ENCODE measurements at regions of chr13 and their contacts with region 1.

Region 1: GRCh38 chr13:96958286-96958891 is 35.9 kb downstream of the OXGR1 start:
- DNase-seq: peak; percentile 64
- H3K4me3 Mint-ChIP-seq: no peak overlapping the region
- H3K27ac Mint-ChIP-seq: no peak overlapping the region
- H3K4me1 Mint-ChIP-seq: no peaks in the 10 kb centered on the region
- H3K27me3 Mint-ChIP-seq: no peaks in the 10 kb centered on the region
- CTCF ChIP-seq: peak; percentile 57

Region 2: GRCh38 chr13:96003304-96003703 is 955.1 kb before region 1 on chr13:
- CTCF ChIA-PET with region 1: interaction called, 13 read pairs
- POLR2A ChIA-PET with region 1: no interaction called
- intact Hi-C with region 1: no loop called
- DNase-seq: peak; percentile 27
- H3K4me3 Mint-ChIP-seq: no peak overlapping the region
- H3K27ac Mint-ChIP-seq: no peak overlapping the region
- H3K4me1 Mint-ChIP-seq: no peaks in the 10 kb centered on the region
- H3K27me3 Mint-ChIP-seq: no peaks in the 10 kb centered on the region
- CTCF ChIP-seq: no peak

Region 3: GRCh38 chr13:96450326-96451020 is 507.9 kb before region 1 on chr13:
- CTCF ChIA-PET with region 1: no interaction called
- POLR2A ChIA-PET with region 1: no interaction called
- intact Hi-C with region 1: no loop called
- DNase-seq: no peak
- H3K4me3 Mint-ChIP-seq: no peak overlapping the region
- H3K27ac Mint-ChIP-seq: no peak overlapping the region
- H3K4me1 Mint-ChIP-seq: no peaks in the 10 kb centered on the region
- H3K27me3 Mint-ChIP-seq: no peaks in the 10 kb centered on the region
- CTCF ChIP-seq: no peak

Region 4: DNA sequence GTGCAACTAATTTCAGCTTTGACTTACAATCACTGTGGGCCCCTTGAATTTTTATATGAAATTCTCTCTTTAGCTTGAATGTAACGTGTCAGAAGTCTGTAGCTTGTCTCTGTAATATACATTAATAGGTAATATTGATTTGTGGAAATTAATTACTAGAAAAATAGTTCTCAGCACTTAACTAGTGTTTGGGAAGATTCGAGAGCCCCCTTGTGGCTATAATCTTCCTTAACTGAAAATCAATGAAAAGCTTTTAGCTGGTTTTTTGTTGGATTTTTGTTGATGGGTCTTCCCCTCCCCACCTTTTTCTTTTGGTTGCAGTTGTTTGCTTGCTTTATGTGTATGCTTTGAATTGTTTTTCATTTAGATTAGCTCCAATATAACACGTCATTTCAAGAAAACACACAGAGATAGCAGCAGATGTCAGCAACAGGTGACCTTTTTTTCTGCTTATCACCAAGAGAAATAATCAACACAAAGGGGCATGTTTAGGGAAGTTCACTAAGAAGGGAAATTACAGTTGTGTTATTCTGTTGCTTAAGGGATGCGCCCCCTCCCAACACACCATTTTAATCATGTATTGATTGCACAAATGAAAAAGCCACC is 140.9 kb before region 1 on chr13:
- CTCF ChIA-PET with region 1: interaction called, 9 read pairs
- POLR2A ChIA-PET with region 1: no interaction called
- intact Hi-C with region 1: loop called (anchors 2 kb)
- DNase-seq: peak; percentile 55
- H3K4me3 Mint-ChIP-seq: no peak overlapping the region
- H3K27ac Mint-ChIP-seq: no peak overlapping the region
- H3K4me1 Mint-ChIP-seq: peaks cover 6% of the 10 kb centered on the region
- H3K27me3 Mint-ChIP-seq: no peaks in the 10 kb centered on the region
- CTCF ChIP-seq: peak; percentile 67

Region 5: DNA sequence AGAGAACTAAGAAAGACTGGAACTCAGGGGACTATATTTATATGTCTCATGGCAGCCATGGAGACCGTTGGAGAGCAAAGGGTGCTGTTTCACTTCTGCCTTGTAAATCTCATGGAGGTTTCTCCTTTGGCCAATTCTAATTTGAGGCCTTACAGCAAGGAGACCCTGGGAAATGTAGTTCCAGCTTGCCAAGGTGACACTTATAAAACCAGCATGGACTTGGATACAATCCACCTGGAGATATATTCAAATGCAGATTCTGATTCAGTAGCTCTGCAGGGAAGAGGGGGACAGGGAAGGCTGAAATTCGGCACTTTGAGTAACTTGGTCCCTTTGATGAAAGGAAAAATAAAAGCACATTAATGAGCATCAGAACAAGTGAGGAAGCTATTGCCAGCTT is 54.2 kb before region 1 on chr13:
- CTCF ChIA-PET with region 1: interaction called, 16 read pairs
- POLR2A ChIA-PET with region 1: no interaction called
- intact Hi-C with region 1: no loop called
- DNase-seq: no peak
- H3K4me3 Mint-ChIP-seq: no peak overlapping the region
- H3K27ac Mint-ChIP-seq: no peak overlapping the region
- H3K4me1 Mint-ChIP-seq: no peaks in the 10 kb centered on the region
- H3K27me3 Mint-ChIP-seq: no peaks in the 10 kb centered on the region
- CTCF ChIP-seq: no peak

Region 6: DNA sequence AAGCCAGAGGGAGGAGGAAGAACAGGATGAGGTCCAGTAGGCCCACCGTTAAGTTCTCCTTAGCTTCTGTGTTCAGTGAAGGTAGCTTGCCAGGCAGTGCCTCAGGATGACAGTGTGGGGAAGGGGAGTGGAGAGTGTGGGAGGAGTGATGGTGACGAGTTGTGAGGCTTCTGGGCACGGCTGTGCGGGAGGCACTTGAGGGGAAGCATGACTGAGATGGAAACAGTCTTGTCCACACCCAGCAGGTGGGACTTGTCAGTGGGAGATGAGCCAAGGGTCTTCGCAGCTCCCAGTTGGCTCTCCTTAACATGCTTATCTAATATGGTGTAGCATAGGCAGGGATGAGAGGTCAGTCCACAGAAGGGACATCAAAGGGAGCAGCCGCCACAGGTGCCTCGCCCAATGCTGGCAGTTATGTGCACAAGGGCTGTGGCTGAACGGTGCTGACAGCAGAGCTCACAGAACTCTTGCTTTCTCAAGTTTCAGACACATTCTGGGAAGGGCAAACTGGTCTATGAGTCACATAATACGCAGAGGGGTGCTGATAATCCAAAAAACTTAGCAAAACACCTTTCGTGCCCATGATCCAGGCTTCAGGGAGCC is 11.6 kb before region 1 on chr13:
- CTCF ChIA-PET with region 1: interaction called, 139 read pairs
- POLR2A ChIA-PET with region 1: no interaction called
- intact Hi-C with region 1: no loop called
- DNase-seq: peak; percentile 30
- H3K4me3 Mint-ChIP-seq: no peak overlapping the region
- H3K27ac Mint-ChIP-seq: no peak overlapping the region
- H3K4me1 Mint-ChIP-seq: no peaks in the 10 kb centered on the region
- H3K27me3 Mint-ChIP-seq: no peaks in the 10 kb centered on the region
- CTCF ChIP-seq: no peak

Region 7: DNA sequence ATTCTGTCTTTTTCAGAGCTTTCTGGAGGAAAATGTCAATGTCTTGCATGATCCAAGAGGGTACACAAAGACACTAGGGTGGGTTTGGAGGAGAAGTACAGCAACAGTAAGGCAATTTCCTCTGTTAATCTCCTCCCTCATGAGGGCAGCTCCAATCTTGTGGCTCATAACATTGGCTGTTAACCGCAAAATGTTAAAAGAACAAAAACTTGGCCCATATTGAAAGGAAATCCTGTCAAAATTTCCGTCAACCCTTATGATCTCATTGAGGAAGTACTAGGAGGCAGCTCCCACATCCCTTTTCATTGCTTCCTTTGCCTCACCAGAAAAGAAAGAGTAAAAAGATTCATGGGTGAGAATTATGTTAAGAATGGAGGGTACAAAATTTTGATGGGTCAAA is 24.3 kb after region 1 on chr13:
- CTCF ChIA-PET with region 1: interaction called, 22 read pairs
- POLR2A ChIA-PET with region 1: no interaction called
- intact Hi-C with region 1: no loop called
- DNase-seq: no peak
- H3K4me3 Mint-ChIP-seq: no peak overlapping the region
- H3K27ac Mint-ChIP-seq: no peak overlapping the region
- H3K4me1 Mint-ChIP-seq: no peaks in the 10 kb centered on the region
- H3K27me3 Mint-ChIP-seq: peaks cover 22% of the 10 kb centered on the region
- CTCF ChIP-seq: no peak

Region 8: DNA sequence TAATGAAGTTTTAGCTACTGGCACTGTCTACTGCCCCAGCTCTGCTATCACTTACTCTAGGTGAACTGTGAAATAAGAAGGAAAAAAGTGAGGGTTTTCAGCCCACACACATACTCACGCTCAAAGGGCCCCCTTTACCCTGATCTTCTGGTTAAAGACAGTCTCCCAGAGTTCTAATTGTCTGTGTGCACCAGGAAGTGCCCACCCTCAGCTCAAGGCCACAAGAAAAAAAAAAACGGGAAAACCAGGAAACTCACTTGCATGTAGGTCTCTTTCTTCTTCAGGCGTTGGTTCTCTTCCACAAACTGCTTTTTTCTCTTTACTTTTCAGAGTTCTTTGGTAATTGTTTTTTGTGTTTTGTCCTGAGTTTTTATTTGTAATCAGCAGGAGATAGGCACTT is 497.7 kb after region 1 on chr13:
- CTCF ChIA-PET with region 1: no interaction called
- POLR2A ChIA-PET with region 1: no interaction called
- intact Hi-C with region 1: no loop called
- DNase-seq: no peak
- H3K4me3 Mint-ChIP-seq: no peak overlapping the region
- H3K27ac Mint-ChIP-seq: no peak overlapping the region
- H3K4me1 Mint-ChIP-seq: peaks cover 11% of the 10 kb centered on the region
- H3K27me3 Mint-ChIP-seq: no peaks in the 10 kb centered on the region
- CTCF ChIP-seq: no peak

Measured in MCF 10A (cell line).